ENCODE measurements at regions of chr5 and their contacts with region 1.

Region 1: GRCh38 chr5:141992349-141992963 is 20.4 kb downstream of the GNPDA1 start:
- DNase-seq: no peak
- ATAC-seq: peak; percentile 50
- H3K4me3 Mint-ChIP-seq: no peak overlapping the region
- H3K27ac Mint-ChIP-seq: no peak overlapping the region
- H3K4me1 Mint-ChIP-seq: no peaks in the 10 kb centered on the region
- H3K27me3 Mint-ChIP-seq: no peaks in the 10 kb centered on the region
- CTCF ChIP-seq: peak; percentile 57

Region 2: DNA sequence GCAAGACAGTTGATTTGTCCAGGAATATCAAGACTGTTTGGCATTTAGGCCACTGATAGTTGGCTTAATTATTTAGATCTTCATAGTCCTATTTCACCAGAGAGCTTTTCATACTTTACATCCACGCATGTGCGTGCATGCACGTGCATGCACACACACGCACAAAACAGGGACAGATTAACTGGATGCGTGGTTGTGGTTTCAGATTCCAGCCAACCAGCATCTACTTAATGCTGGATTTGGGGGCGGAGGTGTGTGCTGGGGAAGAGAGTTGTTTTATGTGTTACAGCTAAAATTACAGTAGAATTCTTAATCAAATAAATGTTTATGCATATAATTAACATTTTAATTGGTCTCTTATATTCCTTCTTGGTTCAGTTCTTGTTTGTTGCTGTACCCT is 16.3 kb before region 1 on chr5:
- CTCF ChIA-PET with region 1: interaction called, 25 read pairs
- POLR2A ChIA-PET with region 1: interaction called, 7 read pairs
- intact Hi-C with region 1: no loop called
- DNase-seq: no peak
- ATAC-seq: no peak
- H3K4me3 Mint-ChIP-seq: no peak overlapping the region
- H3K27ac Mint-ChIP-seq: no peak overlapping the region
- H3K4me1 Mint-ChIP-seq: peaks cover 3% of the 10 kb centered on the region
- H3K27me3 Mint-ChIP-seq: no peaks in the 10 kb centered on the region
- CTCF ChIP-seq: no peak

Region 3: GRCh38 chr5:142095651-142096330 is 103.3 kb after region 1 on chr5:
- CTCF ChIA-PET with region 1: no interaction called
- POLR2A ChIA-PET with region 1: no interaction called
- intact Hi-C with region 1: no loop called
- DNase-seq: no peak
- ATAC-seq: peak; percentile 54
- H3K4me3 Mint-ChIP-seq: no peak overlapping the region
- H3K27ac Mint-ChIP-seq: no peak overlapping the region
- H3K4me1 Mint-ChIP-seq: peaks cover 11% of the 10 kb centered on the region
- H3K27me3 Mint-ChIP-seq: peaks cover 8% of the 10 kb centered on the region
- CTCF ChIP-seq: no peak

Region 4: DNA sequence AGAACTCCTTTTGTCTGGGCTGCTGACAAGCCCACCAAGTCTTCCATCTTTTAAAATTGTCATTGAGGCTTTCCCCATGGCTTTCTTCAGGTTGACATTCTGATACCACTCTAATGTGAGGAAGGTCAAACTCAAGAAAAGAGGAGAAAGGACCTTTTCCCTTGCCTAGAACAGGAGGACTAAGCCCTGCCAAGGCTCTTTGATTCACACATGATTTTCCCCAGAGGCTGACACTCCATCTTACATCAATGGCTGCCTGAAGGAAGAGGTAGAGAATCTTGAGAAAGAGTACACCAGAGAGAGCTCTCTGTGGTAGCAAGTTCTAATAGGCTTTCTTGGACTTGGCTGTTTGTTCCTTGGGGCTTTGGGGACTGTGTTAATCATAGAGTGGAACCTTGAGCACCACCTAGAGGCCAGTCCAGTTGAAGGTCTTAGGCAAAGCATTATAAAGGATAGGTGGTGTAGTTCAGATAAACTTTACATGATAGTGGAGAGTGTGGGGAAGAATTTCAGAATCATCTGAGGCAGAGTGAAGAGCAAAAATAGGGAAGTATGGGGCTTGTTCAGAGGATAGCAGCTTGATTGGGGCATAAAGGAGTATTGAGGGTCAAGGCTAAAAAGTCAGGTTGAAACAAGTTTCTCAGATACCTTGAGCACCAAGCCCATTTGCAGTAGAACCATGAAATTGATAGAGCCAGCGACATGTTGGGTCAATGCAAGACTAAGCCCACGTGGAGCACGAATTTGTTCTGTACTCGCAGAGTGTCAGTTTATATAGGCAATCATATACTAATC is 152.8 kb after region 1 on chr5:
- CTCF ChIA-PET with region 1: interaction called, 89 read pairs
- POLR2A ChIA-PET with region 1: no interaction called
- intact Hi-C with region 1: loop called (anchors 1 kb)
- DNase-seq: no peak
- ATAC-seq: peak; percentile 86
- H3K4me3 Mint-ChIP-seq: no peak overlapping the region
- H3K27ac Mint-ChIP-seq: no peak overlapping the region
- H3K4me1 Mint-ChIP-seq: no peaks in the 10 kb centered on the region
- H3K27me3 Mint-ChIP-seq: no peaks in the 10 kb centered on the region
- CTCF ChIP-seq: peak; percentile 78

Region 5: DNA sequence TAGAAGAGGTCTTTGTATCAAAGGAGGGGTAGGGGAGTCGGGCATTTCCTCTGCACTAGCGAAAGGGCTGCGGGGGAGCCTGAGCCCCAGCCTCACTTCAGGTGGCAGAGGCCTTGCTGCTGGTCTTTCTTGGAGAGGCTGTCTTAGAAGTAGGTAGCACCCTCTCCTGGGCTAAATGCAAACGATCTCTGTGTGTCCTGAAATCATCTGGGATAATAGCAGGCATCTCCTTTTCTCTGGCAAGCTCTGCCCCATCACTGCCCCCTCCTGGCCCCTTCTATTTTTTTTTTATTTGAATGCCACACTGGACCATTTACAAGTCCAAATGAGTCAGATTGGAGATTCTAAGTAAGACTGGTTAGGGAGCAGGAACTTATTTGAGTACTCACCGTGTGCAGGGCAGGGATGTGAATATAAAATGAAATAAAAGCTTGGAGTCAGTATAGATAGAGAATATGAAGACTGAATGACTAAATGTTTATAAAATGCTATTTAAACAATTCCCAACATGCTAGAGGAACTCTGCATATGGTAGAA is 556.4 kb after region 1 on chr5:
- CTCF ChIA-PET with region 1: no interaction called
- POLR2A ChIA-PET with region 1: no interaction called
- intact Hi-C with region 1: loop called (anchors 1 kb)
- DNase-seq: no peak
- ATAC-seq: no peak
- H3K4me3 Mint-ChIP-seq: no peak overlapping the region
- H3K27ac Mint-ChIP-seq: no peak overlapping the region
- H3K4me1 Mint-ChIP-seq: peaks cover 10% of the 10 kb centered on the region
- H3K27me3 Mint-ChIP-seq: peaks cover 19% of the 10 kb centered on the region
- CTCF ChIP-seq: no peak

Measured in activated B cell treated with CpG ODN at 0.5 μM for 24 hours (primary cell).